AG04449 (cell line): ENCODE measurements at regions of chr1 and their contacts with region 1.

Region 1: DNA sequence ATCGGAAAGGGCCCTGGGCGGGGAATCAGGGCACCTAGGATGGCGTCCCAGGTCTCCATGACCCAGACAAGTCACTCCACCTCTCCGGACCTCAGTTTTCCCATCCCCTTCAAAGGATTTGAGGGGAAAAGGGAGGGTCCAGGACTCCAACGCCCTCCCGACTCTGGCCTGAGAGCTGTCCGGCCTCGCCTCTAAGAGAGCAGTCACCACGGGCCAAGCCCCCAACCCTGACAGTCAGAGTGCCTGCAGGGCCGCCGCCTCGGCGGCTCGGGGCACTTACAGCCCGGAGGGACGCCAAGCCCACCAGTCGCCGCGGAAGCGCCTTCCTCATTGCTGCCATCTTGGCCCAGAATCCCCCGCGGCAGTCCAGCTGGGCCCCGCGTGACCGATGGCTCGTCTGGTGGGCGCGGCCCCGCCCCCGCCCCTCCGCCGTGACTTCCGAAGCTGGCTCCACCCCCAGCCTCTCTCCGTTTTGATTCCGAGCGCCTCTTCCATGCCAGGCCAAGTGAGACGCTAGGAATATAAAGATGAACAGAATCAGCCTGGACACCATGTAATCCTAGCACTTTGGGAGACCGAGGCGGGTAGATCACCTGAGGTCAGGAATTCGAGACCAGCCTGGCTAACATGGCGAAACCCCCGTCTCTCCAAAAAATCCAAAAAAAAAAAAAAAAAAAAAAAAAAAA is at the start of gene HMGCL:
- DNase-seq: peak; percentile 26
- H3K4me3 ChIP-seq: peak within 1 kb of the TSS; percentile 97
- CTCF ChIP-seq: no peak

Region 2: DNA sequence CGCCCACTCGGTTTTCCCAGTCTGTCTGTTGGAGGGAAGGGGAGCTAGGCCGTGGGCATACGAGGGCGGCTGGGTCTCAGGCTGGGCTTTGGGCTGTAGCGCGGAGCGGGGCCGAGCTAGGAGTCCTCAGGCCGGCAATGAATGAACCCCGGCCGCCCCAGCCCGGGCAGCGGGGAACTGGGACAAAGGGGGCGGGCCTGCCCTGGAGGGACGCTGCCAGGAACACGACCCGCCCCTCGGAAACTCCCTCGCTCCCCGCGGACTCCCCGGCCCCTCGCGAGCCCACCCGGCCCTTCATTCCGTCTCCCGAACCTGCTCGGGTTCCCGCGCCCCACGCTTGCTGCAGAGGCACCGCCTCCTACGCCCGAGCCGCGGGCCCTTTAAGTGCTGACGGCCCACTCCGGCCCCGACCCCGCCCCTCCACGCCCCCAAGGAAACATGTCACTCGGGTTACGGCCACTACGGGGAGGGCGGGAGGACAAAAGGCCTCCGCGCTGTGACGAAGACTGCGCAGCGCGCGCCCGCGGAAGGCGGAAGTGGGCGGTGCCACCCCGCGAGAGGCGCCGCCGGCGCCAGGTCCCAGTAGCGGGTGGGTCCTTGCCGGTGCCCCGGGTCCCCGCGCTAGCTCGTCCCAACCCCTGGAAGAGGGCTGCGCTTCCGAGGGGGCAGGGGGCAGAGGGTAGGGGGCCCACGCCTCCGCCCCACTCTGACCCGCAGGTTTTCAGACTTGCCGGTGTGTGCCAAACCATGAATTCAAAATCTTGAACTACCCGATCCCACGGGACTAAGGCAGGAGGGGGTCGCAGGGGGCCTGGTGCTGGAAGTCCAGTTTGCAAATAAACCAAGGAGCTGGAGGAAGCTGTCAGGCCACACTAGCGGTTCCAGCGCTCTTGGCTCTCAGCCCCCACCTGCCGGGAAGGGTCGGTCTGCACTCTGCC is 24.6 kb before region 1 on chr1 and contains the start of gene GALE:
- CTCF ChIA-PET with region 1: interaction called, 134 read pairs
- POLR2A ChIA-PET with region 1: interaction called, 10 read pairs
- DNase-seq: peak; percentile 56
- H3K4me3 ChIP-seq: peak within 1 kb of the TSS; percentile 85
- CTCF ChIP-seq: no peak

Region 3: GRCh38 chr1:23809751-23810171 is 15.5 kb before region 1 on chr1:
- CTCF ChIA-PET with region 1: interaction called, 134 read pairs
- POLR2A ChIA-PET with region 1: interaction called, 6 read pairs
- DNase-seq: no peak
- H3K4me3 ChIP-seq: no peak overlapping the region
- CTCF ChIP-seq: peak; percentile 84

Region 4: DNA sequence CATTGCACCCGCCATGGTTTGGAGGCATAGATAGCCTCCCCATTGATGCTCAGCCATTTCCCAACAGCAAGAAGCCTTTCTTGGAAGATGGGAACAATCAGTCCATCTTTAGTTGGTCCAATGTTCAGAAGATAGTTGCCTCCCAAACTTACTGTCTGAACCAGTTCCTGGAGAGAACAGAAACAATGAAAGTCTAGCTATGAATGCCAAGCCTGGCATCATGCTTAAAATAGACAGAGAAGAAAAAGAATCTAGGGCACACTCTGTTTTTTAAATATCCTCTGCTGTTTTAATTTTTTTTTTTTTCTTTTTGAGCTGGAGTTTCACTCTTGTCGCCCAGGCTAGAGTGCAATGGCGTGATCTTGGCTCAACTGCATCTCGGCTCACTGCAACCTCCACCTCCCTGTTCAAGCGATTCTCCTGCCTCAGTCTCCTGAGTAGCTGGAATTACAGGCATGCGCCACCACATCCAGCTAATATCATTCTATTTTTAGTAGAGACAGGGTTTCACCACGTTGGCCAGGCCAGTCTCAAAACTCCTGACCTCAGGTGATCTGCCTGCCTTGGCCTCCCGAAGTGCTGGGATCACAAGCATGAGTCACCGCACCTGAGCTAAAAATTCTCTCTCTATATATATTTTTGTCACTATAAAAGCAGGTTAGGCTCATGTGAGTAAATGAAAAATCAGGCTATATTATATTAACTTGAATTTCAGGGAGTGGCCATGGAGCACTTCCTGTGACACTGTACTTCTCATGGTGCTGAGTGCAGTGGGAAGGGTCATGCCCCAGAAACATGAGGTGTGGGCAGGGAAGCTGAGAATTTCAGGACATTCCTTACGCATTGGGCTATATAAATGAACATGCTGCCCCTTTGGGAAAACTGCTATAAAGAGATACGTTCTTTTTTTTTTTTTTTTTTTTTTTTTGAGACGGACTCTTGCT is 23.7 kb after region 1 on chr1:
- CTCF ChIA-PET with region 1: no interaction called
- POLR2A ChIA-PET with region 1: no interaction called
- DNase-seq: no peak
- H3K4me3 ChIP-seq: no peak overlapping the region
- CTCF ChIP-seq: no peak